IMR-90 (cell line): ENCODE measurements at regions of chr15 and their contacts with region 1.

Region 1: DNA sequence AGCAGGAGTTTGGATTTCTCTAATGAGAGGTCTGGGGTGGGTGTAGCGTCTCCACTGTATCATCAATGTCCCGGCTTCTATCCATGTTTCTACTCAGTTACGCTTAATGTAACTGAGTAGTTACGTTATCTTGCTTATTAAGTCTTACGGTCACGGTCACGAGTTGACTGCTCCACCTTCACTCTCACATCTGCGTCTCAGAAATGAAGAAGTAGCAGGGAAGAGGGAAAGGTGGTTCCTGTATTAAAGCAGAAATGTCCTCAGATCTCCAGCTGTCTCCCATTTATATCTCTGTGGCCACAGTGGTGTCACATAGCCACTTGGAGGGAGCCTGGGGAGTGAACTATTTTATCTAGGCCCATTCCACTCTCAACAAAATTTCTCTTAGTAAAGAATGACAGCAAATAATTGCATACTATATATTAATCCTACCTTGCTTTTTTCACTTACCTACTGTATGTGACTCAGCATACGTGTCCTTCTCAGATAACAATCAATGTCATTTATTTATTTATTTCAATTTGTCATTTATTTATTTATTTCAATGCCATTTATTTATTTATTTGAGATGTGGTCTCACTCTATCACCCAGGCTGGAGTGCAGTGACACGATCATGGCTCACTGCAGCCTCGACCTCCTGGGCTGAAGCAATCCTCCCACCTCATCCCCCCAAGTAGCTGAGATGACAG is 39.7 kb upstream of the RNU6-1 start:
- DNase-seq: no peak
- ATAC-seq: no peak
- H3K4me3 ChIP-seq: no peak overlapping the region
- H3K27ac ChIP-seq: no peak overlapping the region
- H3K4me1 ChIP-seq: 0 out of 2 replicates have a peak, but pooled peaks cover 2% of the 10 kb centered on the region
- H3K27me3 ChIP-seq: peaks cover 8% of the 10 kb centered on the region
- CTCF ChIP-seq: no peak
- POLR2A ChIP-seq: no peak
- RAD21 ChIP-seq: no peak

Region 2: DNA sequence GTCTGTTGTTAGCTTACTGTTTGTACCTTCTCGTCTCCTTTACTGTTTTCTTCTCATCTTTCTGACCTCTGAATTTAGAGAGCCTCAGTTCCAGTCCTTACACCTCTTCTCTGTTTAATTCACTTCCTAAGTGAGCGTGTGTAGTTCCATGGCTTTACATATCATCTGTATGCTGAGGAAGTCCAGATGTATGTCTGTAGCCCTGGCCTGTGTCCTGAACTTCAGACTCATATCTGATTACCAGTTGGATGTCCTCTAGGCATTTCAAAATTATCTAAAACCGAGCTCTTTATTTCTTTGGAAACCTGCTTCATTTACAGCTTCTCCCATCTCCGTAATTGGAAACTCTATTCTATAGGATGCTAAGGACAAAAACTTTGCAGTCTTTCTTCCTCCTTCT is 261.3 kb before region 1 on chr15:
- CTCF ChIA-PET with region 1: no interaction called
- POLR2A ChIA-PET with region 1: no interaction called
- dilution Hi-C with region 1: no loop called
- in situ Hi-C with region 1: no loop called
- intact Hi-C with region 1: no loop called
- DNase-seq: no peak
- ATAC-seq: no peak
- H3K4me3 ChIP-seq: no peak overlapping the region
- H3K27ac ChIP-seq: no peak overlapping the region
- H3K4me1 ChIP-seq: peaks cover 2% of the 10 kb centered on the region; the same call in 1 of the 2 replicates
- H3K27me3 ChIP-seq: no peaks in the 10 kb centered on the region
- CTCF ChIP-seq: no peak
- POLR2A ChIP-seq: no peak
- RAD21 ChIP-seq: no peak

Region 3: DNA sequence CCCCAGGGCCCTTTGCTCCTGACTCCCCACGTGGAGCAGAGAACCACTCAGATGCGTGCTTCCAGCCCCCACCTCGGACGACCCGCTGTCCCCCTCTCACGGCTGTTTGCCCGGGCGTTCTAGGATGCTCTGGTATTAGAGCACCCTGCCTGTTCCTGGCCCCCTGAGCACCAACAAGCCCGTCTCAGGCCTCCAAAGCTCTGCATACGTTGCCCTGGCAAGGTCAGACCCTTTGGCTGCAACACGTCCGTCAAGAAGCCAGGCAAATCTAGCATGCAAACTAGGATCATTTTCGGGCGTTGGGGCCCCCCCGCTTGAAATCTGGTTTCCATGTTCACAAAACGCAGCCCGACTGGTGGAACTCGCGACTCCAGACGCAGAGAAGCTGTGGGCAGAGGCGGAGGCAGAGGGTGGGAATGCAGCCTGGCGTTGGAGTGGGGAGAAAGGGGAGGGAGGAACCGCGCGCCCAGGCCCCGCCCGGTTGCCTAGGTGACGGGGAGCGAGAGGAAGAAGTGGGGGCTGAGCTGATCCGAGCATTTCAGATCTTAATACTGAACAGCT is 88.4 kb after region 1 on chr15:
- CTCF ChIA-PET with region 1: no interaction called
- POLR2A ChIA-PET with region 1: no interaction called
- dilution Hi-C with region 1: no loop called
- in situ Hi-C with region 1: no loop called
- intact Hi-C with region 1: loop called (anchors 5 kb)
- DNase-seq: peak; percentile 47
- ATAC-seq: peak; percentile 100
- H3K4me3 ChIP-seq: peak overlapping the region; percentile 28
- H3K27ac ChIP-seq: no peak overlapping the region
- H3K4me1 ChIP-seq: no peaks in the 10 kb centered on the region; the same call in 1 of the 2 replicates
- H3K27me3 ChIP-seq: peaks cover 10% of the 10 kb centered on the region
- CTCF ChIP-seq: no peak
- POLR2A ChIP-seq: no peak
- RAD21 ChIP-seq: no peak